Astrocyte of the cerebellum (primary cell): ENCODE measurements at regions of chr10 and their contacts with region 1.

Region 1: GRCh38 chr10:113953505-113954272 is 90.0 kb upstream of the ADRB1 start:
- DNase-seq: no peak
- H3K4me3 ChIP-seq: no peak overlapping the region
- CTCF ChIP-seq: no peak

Region 2: GRCh38 chr10:113907166-113907565 is 46.5 kb before region 1 on chr10:
- in situ Hi-C with region 1: no loop called
- DNase-seq: peak; percentile 84
- H3K4me3 ChIP-seq: no peak overlapping the region
- CTCF ChIP-seq: no peak

Region 3: DNA sequence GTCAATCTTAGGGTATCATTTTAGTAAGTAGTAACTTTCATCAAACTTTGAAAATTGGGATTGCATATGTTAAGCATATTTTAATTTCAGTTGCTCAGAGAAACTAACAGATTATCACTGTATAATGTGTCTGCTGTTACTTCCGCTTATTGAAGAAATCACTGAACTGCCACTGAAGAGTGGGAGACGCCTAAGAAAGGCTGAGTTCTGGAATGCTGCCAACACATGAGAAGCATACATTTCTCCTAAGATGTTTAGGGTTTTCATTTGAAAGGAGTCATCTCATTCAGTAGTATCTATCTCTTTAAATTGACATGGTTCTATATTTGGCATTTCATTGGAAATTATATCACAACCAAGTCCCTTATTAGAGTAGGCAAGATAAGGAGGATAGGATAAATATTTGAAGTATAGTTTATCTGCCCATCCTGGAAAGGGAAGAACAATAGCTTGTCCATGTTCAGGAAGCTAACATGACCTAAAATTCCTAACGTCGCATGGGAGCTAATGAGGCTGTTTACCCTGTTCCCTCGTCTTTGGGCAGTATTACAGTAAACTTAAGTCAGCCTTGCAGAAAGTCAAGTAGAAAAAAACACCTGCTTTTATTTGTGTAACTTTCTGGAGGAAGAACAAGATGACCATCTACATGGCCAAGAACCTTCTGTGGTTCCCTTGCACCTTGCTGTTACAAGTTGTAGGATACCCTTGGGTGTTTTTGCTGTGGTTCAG is 32.0 kb before region 1 on chr10:
- in situ Hi-C with region 1: no loop called
- DNase-seq: no peak
- H3K4me3 ChIP-seq: no peak overlapping the region
- CTCF ChIP-seq: no peak

Region 4: GRCh38 chr10:113993489-113993991 is 39.9 kb after region 1 on chr10:
- in situ Hi-C with region 1: loop called (anchors 5 kb)
- DNase-seq: peak; percentile 73
- H3K4me3 ChIP-seq: no peak overlapping the region
- CTCF ChIP-seq: peak; percentile 23